Sciatic nerve (tissue), 2 donors: ENCODE measurements at regions of chr12 and their contacts with region 1.

Region 1: DNA sequence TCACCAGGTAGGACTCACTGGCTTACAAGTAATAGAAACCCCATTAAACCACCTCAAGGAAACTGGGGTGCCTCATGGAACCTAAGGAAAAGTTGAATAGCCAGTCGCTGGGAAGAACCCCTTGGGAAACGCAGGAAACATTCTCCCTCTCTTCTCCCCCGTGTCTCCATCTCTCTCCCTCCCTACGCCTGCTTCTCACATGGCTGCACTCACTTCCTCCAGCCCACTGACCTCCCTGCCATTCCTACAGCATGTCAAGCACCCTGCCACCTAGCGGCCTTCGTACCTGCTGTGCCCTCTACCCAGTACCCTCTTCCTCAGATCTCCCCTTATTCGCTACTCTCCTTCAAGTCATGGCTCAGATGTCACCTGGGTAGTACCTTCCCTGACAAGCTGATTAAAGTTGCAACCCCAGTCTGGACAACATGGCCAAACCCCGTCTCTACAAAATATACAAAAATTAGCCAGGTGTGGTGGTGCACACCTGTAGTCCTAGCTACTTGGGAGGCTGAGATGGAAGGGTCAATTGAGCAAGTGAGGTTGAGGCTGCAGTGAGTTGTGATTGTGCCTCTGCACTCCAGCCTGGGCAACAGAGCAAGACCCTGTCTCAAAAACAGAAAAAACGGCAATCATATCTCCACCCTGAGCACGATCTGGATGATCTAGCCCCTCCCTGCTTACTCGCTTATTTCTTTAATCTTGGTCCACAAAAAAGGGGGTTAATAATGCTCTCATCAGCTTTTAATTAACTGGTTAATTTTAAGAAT is 6.4 kb upstream of the DTX1 start:
- DNase-seq: no peak
- ATAC-seq: no peak

Region 2: DNA sequence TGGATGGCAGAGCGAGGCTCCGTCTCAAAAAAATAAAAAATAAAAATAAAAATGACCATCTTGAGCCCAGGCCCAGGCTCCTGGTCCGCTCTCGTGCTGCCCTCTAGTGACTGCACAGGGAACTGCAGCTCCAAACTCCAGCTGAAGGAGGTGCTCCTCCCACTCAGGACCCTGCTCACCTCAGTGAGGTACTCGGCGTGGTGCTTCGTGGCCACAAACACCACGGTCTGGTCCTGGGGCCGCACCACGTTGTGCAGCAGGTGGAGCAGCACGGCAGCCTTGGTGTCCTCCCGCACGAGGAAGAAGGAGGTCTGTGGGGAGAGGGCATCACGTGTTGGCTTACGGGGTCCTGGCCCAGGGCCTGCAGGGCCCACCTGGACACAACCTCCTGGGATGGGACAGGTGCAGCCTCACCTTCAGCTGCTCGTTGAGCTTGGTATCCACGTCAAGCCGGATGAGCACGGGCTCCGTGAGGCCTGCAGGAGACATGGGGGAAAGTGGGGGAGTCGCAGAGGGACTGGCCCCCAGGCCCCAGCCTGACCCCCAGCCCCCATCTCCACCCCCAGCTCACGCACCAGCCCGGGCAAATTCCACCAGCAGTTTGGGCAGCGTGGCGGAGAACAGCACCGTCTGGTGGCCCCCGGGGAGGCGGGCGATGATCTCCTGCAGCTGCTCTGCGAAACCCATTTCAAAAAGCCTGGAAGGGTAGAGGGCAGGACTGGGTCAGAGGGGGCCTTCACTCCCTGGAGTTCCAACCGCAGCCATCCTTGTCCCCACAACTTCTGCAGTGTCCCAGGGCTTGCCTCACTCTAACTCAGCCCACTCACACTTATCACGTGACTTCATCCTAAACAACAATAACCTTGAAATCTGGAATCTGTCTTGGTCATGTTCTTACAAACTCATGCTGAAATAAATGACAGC is 124.6 kb after region 1 on chr12:
- intact Hi-C with region 1: loop called (anchors 5 kb)
- DNase-seq: peak; percentile 88
- ATAC-seq: peak; percentile 79